GM12878 (cell line): ENCODE measurements at regions of chr6 and their contacts with region 1.

Region 1: GRCh38 chr6:125956506-125957390 is at the start of gene HINT3:
- DNase-seq: peak; percentile 83
- ATAC-seq: peak; percentile 85
- H3K4me3 ChIP-seq: peak within 1 kb of the TSS; percentile 82
- H3K27ac ChIP-seq: peak within 1 kb of the TSS; percentile 88
- H3K4me1 ChIP-seq: peaks cover 7% of the 10 kb centered on the region
- H3K27me3 ChIP-seq: no peaks in the 10 kb centered on the region
- CTCF ChIP-seq: peak; percentile 97 to 99 (median 98)
- EP300 ChIP-seq: 0 out of 4 replicates have a peak, but pooled peaks of 1 of the 2 experiments have one; percentile 27
- POLR2A ChIP-seq: peak; percentile 82
- RAD21 ChIP-seq: peak; percentile 76
- polyA plus RNA-seq, gene HINT3: 0.72 to 1.4 TPM

Region 2: GRCh38 chr6:125451750-125452149 is 505.0 kb before region 1 on chr6:
- CTCF ChIA-PET with region 1: no interaction called
- POLR2A ChIA-PET with region 1: no interaction called
- RAD21 ChIA-PET with region 1: no interaction called
- SMC1A ChIA-PET with region 1: no interaction called
- in situ Hi-C with region 1: no loop called
- intact Hi-C with region 1: no loop called
- DNase-seq: no peak
- ATAC-seq: no peak
- H3K4me3 ChIP-seq: no peak overlapping the region
- H3K27ac ChIP-seq: no peak overlapping the region
- H3K4me1 ChIP-seq: no peaks in the 10 kb centered on the region
- H3K27me3 ChIP-seq: no peaks in the 10 kb centered on the region
- CTCF ChIP-seq: no peak
- EP300 ChIP-seq: no peak
- POLR2A ChIP-seq: no peak
- RAD21 ChIP-seq: no peak

Region 3: GRCh38 chr6:125818225-125818657 is 138.5 kb before region 1 on chr6:
- CTCF ChIA-PET with region 1: interaction called, 10 read pairs
- POLR2A ChIA-PET with region 1: no interaction called
- RAD21 ChIA-PET with region 1: interaction called, 7 read pairs
- SMC1A ChIA-PET with region 1: no interaction called
- in situ Hi-C with region 1: no loop called
- intact Hi-C with region 1: no loop called
- DNase-seq: no peak
- ATAC-seq: peak; percentile 30
- H3K4me3 ChIP-seq: peak overlapping the region; percentile 57
- H3K27ac ChIP-seq: peak overlapping the region; percentile 63
- H3K4me1 ChIP-seq: peaks cover 27% of the 10 kb centered on the region
- H3K27me3 ChIP-seq: no peaks in the 10 kb centered on the region
- CTCF ChIP-seq: no peak
- EP300 ChIP-seq: no peak
- POLR2A ChIP-seq: no peak
- RAD21 ChIP-seq: no peak

Region 4: DNA sequence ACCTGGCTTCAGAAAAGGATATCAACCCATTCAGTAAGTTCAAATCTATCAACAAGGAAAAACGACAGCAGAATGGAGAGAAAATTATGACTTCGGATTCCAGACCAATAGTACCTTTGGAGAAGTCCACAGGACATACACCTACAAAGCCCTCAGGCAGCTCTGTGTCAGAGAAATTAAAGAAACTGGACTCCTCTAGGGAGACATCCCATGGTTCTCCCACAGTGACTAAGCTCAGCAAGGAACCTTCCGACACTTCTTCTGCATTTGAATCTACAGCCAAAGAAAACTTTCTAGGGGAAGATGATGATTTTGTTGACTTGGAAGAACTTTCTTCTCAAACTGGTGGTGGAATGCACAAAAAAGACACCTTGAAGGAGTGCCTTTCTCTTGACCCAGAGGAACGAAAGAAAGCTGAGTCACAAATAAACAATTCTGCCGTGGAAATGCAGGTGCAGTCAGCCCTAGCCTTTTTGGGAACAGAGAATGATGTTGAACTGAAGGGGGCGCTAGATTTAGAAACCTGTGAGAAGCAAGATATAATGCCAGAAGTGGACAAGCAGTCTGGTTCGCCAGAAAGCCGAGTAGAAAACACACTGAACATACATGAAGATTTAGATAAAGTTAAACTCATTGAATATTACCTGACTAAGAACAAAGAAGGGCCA is 67.6 kb before region 1 on chr6:
- CTCF ChIA-PET with region 1: interaction called, 42 read pairs
- POLR2A ChIA-PET with region 1: no interaction called
- RAD21 ChIA-PET with region 1: interaction called, 13 read pairs
- SMC1A ChIA-PET with region 1: interaction called, 13 read pairs
- in situ Hi-C with region 1: no loop called
- intact Hi-C with region 1: loop called (anchors 1 kb)
- DNase-seq: no peak
- ATAC-seq: peak; percentile 66
- H3K4me3 ChIP-seq: no peak overlapping the region
- H3K27ac ChIP-seq: no peak overlapping the region
- H3K4me1 ChIP-seq: no peaks in the 10 kb centered on the region
- H3K27me3 ChIP-seq: no peaks in the 10 kb centered on the region
- CTCF ChIP-seq: peak; percentile 46 to 52 (median 50)
- EP300 ChIP-seq: no peak
- POLR2A ChIP-seq: no peak
- RAD21 ChIP-seq: peak; percentile 51

Region 5: DNA sequence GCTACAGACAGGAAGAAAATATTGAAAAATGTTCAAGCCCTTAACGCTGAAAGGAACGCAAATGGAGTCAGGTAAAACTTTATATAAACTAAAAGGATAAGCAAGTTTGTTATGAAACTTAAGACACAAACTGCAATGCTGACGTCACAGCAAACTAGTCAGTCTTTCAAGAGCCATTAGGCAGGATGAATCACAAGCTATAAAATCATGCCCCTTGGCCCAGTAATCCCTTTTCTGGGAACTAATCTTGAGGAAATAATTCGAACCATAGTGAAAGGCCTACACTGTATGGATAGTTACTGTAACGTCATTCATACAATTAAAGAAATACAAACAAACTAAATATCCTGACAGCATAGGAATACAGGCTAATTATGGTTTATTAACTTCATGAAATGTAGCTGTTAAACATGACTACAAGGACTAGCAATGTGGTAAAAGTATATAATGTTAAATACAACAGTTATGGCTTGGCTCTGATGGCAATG is 42.8 kb before region 1 on chr6:
- CTCF ChIA-PET with region 1: interaction called, 39 read pairs
- POLR2A ChIA-PET with region 1: interaction called, 11 read pairs
- RAD21 ChIA-PET with region 1: interaction called, 27 read pairs
- SMC1A ChIA-PET with region 1: interaction called, 24 read pairs
- in situ Hi-C with region 1: no loop called
- intact Hi-C with region 1: no loop called
- DNase-seq: no peak
- ATAC-seq: no peak
- H3K4me3 ChIP-seq: no peak overlapping the region
- H3K27ac ChIP-seq: no peak overlapping the region
- H3K4me1 ChIP-seq: peaks cover 21% of the 10 kb centered on the region
- H3K27me3 ChIP-seq: no peaks in the 10 kb centered on the region
- CTCF ChIP-seq: no peak
- EP300 ChIP-seq: no peak
- POLR2A ChIP-seq: no peak
- RAD21 ChIP-seq: no peak

Region 6: GRCh38 chr6:125931733-125932450 is 24.9 kb before region 1 on chr6:
- CTCF ChIA-PET with region 1: interaction called, 10 read pairs
- POLR2A ChIA-PET with region 1: no interaction called
- RAD21 ChIA-PET with region 1: interaction called, 4 read pairs
- SMC1A ChIA-PET with region 1: interaction called, 5 read pairs
- in situ Hi-C with region 1: no loop called
- intact Hi-C with region 1: no loop called
- DNase-seq: peak; percentile 42
- ATAC-seq: peak; percentile 92
- H3K4me3 ChIP-seq: no peak overlapping the region
- H3K27ac ChIP-seq: peak overlapping the region; percentile 50
- H3K4me1 ChIP-seq: no peaks in the 10 kb centered on the region; the same call in 1 of the 2 replicates
- H3K27me3 ChIP-seq: no peaks in the 10 kb centered on the region
- CTCF ChIP-seq: no peak
- EP300 ChIP-seq: peak in 1 of 2 experiments; percentile 40; a peak in 1 of 4 replicates
- POLR2A ChIP-seq: no peak
- RAD21 ChIP-seq: no peak

Region 7: GRCh38 chr6:125986300-125987025 is 29.7 kb after region 1 on chr6 and contains the start of gene TRMT11:
- CTCF ChIA-PET with region 1: interaction called, 25 read pairs
- POLR2A ChIA-PET with region 1: interaction called, 8 read pairs
- RAD21 ChIA-PET with region 1: interaction called, 21 read pairs
- SMC1A ChIA-PET with region 1: interaction called, 7 read pairs
- in situ Hi-C with region 1: no loop called
- intact Hi-C with region 1: no loop called
- DNase-seq: peak; percentile 69
- ATAC-seq: peak; percentile 94
- H3K4me3 ChIP-seq: peak within 1 kb of the TSS; percentile 85
- H3K27ac ChIP-seq: peak within 1 kb of the TSS; percentile 95
- H3K4me1 ChIP-seq: peaks cover 5% of the 10 kb centered on the region; the same call in 1 of the 2 replicates
- H3K27me3 ChIP-seq: no peaks in the 10 kb centered on the region
- CTCF ChIP-seq: no peak
- EP300 ChIP-seq: 0 out of 4 replicates have a peak, but pooled peaks of 1 of the 2 experiments have one; percentile 34
- POLR2A ChIP-seq: peak; percentile 96
- RAD21 ChIP-seq: no peak
- polyA plus RNA-seq, gene TRMT11: 56.8 to 72.4 TPM